Heart right ventricle (tissue), 16 donors: ENCODE measurements at regions of chr6 and their contacts with region 1.

Region 1: DNA sequence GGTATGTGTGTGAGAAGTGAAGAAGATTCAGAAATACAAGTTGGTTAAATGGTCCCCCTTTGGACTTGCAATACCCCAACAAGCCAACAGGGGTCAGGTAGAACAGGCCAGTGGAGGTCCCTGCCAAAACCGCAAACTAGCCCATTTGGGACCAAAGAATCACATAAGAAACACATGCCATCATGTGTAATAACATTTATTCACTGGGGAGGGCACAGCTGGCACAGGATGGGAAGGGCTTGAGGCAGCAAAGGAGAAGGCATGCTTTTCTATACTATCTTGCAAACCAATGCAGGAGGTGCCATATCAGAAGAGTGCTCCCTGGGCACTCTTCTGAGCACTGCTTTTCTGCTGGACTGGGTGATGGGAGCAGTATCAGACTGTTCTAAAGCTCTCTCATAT is 116.1 kb upstream of the TRAF3IP2 start:
- DNase-seq: peak in 1 of 2 donors; percentile 20
- ATAC-seq: peak in 3 of 8 donors; percentile 17 to 44 (median 22)
- H3K4me3 ChIP-seq: no peak overlapping the region
- H3K27ac ChIP-seq: peak overlapping the region in 6 of 10 donors; percentile 3 to 55 (median 36)
- H3K4me1 ChIP-seq: peaks cover 0 to 53% (median 49%) of the 10 kb centered on the region in 9 donors
- H3K27me3 ChIP-seq: no peaks in the 10 kb centered on the region
- CTCF ChIP-seq: peak; percentile 30 to 54 (median 40)

Region 2: GRCh38 chr6:111764238-111765175 is 42.8 kb after region 1 on chr6:
- intact Hi-C with region 1: loop called in 1 of 10 experiments (anchors 5 kb)
- DNase-seq: no peak
- ATAC-seq: no peak
- H3K4me3 ChIP-seq: no peak overlapping the region
- H3K27ac ChIP-seq: peak overlapping the region in 4 of 10 donors; percentile 16 to 80 (median 42)
- H3K4me1 ChIP-seq: peaks cover 2 to 94% (median 81%) of the 10 kb centered on the region in 9 donors
- H3K27me3 ChIP-seq: no peaks in the 10 kb centered on the region
- CTCF ChIP-seq: no peak